ENCODE measurements at regions of chr1 and their contacts with region 1.

Region 1: DNA sequence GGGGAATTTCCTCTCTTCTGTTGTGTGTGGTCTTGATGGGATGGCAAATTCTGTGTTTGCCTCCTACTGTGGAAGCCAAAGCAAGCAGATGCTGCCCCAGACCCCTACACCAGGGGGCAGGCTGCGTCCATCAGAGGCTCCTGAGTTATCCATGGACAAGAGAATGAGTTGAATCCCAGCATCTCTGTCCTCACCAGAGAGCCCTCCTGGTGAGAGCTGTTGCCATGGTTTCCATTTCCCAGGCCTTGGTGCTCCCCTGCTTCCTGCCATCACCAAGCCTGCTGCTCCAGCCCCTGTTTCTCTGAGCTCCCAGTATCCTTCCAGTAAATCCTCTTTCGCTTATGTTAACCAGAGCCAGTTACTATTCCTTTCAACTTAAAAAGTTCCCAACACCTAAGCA is 20.4 kb upstream of the GNG12 start:
- DNase-seq: peak; percentile 95
- ATAC-seq: peak; percentile 98
- H3K4me3 Mint-ChIP-seq: no peak overlapping the region
- H3K27ac Mint-ChIP-seq: no peak overlapping the region
- H3K4me1 Mint-ChIP-seq: peaks cover 8% of the 10 kb centered on the region
- H3K27me3 Mint-ChIP-seq: no peaks in the 10 kb centered on the region
- CTCF ChIP-seq: peak; percentile 85

Region 2: GRCh38 chr1:67814121-67814772 is 39.5 kb before region 1 on chr1:
- CTCF ChIA-PET with region 1: no interaction called
- POLR2A ChIA-PET with region 1: no interaction called
- DNase-seq: no peak
- ATAC-seq: no peak
- H3K4me3 Mint-ChIP-seq: no peak overlapping the region
- H3K27ac Mint-ChIP-seq: no peak overlapping the region
- H3K4me1 Mint-ChIP-seq: peaks cover 32% of the 10 kb centered on the region
- H3K27me3 Mint-ChIP-seq: no peaks in the 10 kb centered on the region; the same call in 1 of the 2 replicates
- CTCF ChIP-seq: no peak

Region 3: GRCh38 chr1:68010090-68010489 is 156.4 kb after region 1 on chr1:
- CTCF ChIA-PET with region 1: interaction called, 37 read pairs
- POLR2A ChIA-PET with region 1: no interaction called
- DNase-seq: no peak
- ATAC-seq: peak; percentile 46; the same call in 1 of the 2 replicates
- H3K4me3 Mint-ChIP-seq: no peak overlapping the region
- H3K27ac Mint-ChIP-seq: no peak overlapping the region
- H3K4me1 Mint-ChIP-seq: no peaks in the 10 kb centered on the region
- H3K27me3 Mint-ChIP-seq: no peaks in the 10 kb centered on the region
- CTCF ChIP-seq: no peak

Region 4: GRCh38 chr1:68051475-68051874 is 197.8 kb after region 1 on chr1:
- CTCF ChIA-PET with region 1: interaction called, 12 read pairs
- POLR2A ChIA-PET with region 1: no interaction called
- DNase-seq: peak; percentile 73
- ATAC-seq: peak; percentile 87
- H3K4me3 Mint-ChIP-seq: peak overlapping the region; percentile 67
- H3K27ac Mint-ChIP-seq: no peak overlapping the region
- H3K4me1 Mint-ChIP-seq: peaks cover 17% of the 10 kb centered on the region
- H3K27me3 Mint-ChIP-seq: peaks cover 41% of the 10 kb centered on the region
- CTCF ChIP-seq: no peak

Region 5: DNA sequence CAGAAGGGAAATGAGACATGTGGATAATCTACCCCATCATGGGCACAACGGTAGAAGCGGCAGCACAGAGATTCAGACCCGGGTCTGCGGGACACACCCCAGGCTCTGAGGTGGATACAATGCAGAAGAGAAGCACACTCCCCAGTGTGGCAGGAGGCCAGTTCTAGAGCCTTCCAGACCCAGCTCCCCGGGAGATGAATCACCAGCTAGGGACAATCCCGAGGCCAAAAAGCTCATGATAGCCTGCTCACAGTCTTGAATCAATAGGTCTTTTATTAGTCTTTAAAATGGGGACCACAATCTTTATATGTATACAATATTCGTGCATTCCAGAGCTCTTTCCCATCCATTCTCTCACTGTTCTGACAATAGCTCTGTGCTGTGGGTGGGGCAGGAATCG is 254.1 kb after region 1 on chr1:
- CTCF ChIA-PET with region 1: interaction called, 14 read pairs
- POLR2A ChIA-PET with region 1: no interaction called
- DNase-seq: no peak
- ATAC-seq: peak; percentile 57
- H3K4me3 Mint-ChIP-seq: no peak overlapping the region
- H3K27ac Mint-ChIP-seq: no peak overlapping the region
- H3K4me1 Mint-ChIP-seq: peaks cover 15% of the 10 kb centered on the region
- H3K27me3 Mint-ChIP-seq: no peaks in the 10 kb centered on the region
- CTCF ChIP-seq: no peak

Measured in WTC11 (cell line).